GM10248 (cell line): ENCODE measurements at regions of chr15 and their contacts with region 1.

Region 1: GRCh38 chr15:32888221-32888761 is 170.5 kb downstream of the GREM1 start:
- DNase-seq: no peak
- CTCF ChIP-seq: no peak

Region 2: GRCh38 chr15:32877252-32878019 is 10.9 kb before region 1 on chr15:
- CTCF ChIA-PET with region 1: interaction called, 11 read pairs
- POLR2A ChIA-PET with region 1: no interaction called
- DNase-seq: no peak
- CTCF ChIP-seq: no peak

Region 3: DNA sequence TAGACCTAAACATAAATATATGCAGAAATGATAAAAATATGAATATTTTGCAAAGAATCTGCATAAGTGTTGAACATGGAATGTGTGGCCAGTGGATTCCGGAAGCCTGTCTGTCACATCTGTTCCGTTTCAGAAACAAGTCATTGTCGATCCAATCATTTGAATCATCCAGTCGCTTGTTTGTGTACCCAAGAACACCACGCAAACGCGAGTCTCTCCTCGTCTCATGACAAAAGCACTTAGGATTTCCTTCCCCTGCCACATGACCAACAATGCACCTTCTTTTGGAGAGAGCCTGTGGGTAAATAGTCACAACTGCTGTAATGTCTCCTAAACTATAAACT is 226.1 kb after region 1 on chr15:
- CTCF ChIA-PET with region 1: no interaction called
- POLR2A ChIA-PET with region 1: no interaction called
- DNase-seq: no peak
- CTCF ChIP-seq: no peak